ENCODE measurements at regions of chr17 and their contacts with region 1.

Region 1: DNA sequence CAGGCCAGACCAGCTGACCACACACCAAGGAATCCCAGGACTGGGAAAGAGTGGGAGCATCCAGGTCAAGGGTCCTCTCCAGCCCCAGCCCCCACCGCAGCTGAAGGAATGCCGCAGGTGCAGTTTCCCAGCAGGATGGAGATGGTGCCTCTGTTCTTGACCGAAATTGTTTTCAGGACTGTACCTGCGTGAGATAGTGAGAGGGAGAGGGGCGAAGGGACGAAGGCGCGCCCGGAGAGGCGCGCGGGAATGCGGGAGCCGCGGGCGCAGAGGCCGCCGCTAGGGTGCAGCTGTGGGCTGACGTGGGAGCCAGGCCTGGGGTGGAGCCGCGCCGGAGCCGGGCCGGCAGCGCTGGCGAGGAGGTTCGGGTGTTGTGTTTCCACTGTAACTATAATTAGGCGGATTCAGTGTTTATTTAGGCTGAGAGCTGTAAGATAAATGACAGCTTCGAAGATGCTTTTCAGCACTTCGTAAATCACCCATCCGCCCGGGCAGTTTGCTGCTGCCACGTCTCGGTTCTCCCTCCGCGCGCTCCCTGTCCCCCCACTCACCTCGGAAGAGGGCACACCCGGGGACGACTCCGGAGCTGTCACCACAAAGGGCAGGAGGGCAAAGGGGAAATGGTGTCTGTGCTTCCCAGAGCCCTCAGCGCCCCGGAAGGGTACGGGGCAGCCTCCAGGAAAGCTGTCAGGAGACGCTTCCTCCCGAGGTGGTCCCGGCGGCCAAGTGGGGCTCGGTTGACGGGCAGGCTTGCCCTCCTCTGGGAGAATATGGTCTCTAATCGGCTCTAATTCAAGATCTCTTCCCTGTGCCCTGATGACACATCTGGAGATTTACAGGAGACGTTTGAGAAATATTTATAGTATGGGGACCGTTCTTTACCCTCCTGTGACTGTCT is 38.2 kb downstream of the HOXB1 start:
- DNase-seq: peak; percentile 76
- H3K4me3 Mint-ChIP-seq: peak overlapping the region; percentile 39
- H3K27ac Mint-ChIP-seq: no peak overlapping the region
- H3K4me1 Mint-ChIP-seq: peaks cover 17% of the 10 kb centered on the region
- H3K27me3 Mint-ChIP-seq: peaks cover 11% of the 10 kb centered on the region

Region 2: GRCh38 chr17:48351831-48352332 is 140.8 kb before region 1 on chr17:
- CTCF ChIA-PET with region 1: interaction called, 23 read pairs
- POLR2A ChIA-PET with region 1: no interaction called
- intact Hi-C with region 1: no loop called
- DNase-seq: no peak
- H3K4me3 Mint-ChIP-seq: no peak overlapping the region
- H3K27ac Mint-ChIP-seq: no peak overlapping the region
- H3K4me1 Mint-ChIP-seq: peaks cover 6% of the 10 kb centered on the region
- H3K27me3 Mint-ChIP-seq: no peaks in the 10 kb centered on the region

Region 3: DNA sequence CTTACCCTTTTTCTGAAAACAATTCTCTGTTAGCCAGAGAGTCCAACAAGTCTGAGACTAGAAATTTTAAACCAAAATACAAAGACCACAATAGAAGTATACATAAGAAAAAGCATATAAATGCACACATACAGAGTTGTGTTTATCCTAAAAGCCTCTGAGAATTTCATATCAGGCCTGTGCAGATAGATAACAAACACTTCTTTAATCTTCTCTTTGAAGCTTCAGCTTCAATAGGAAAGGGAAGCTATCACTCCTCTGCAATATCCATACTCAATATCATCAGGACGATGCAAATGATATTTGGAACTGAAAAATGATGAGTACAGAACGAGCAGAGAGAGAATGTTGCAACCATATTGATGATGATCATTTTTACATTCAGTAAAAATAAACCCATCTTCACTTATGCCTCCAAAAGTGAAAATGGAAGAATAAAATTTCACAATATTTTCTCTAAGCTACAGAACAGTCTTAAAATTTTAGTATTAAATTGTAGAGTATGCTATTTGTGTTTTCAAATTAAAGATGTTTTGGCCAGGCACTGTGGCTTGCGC is 124.2 kb before region 1 on chr17:
- CTCF ChIA-PET with region 1: no interaction called
- POLR2A ChIA-PET with region 1: no interaction called
- intact Hi-C with region 1: no loop called
- DNase-seq: no peak
- H3K4me3 Mint-ChIP-seq: no peak overlapping the region
- H3K27ac Mint-ChIP-seq: no peak overlapping the region
- H3K4me1 Mint-ChIP-seq: peaks cover 16% of the 10 kb centered on the region
- H3K27me3 Mint-ChIP-seq: no peaks in the 10 kb centered on the region

Region 4: GRCh38 chr17:48460052-48460451 is 32.6 kb before region 1 on chr17:
- CTCF ChIA-PET with region 1: no interaction called
- POLR2A ChIA-PET with region 1: no interaction called
- intact Hi-C with region 1: no loop called
- DNase-seq: no peak
- H3K4me3 Mint-ChIP-seq: no peak overlapping the region
- H3K27ac Mint-ChIP-seq: no peak overlapping the region
- H3K4me1 Mint-ChIP-seq: peaks cover 37% of the 10 kb centered on the region
- H3K27me3 Mint-ChIP-seq: no peaks in the 10 kb centered on the region

Region 5: DNA sequence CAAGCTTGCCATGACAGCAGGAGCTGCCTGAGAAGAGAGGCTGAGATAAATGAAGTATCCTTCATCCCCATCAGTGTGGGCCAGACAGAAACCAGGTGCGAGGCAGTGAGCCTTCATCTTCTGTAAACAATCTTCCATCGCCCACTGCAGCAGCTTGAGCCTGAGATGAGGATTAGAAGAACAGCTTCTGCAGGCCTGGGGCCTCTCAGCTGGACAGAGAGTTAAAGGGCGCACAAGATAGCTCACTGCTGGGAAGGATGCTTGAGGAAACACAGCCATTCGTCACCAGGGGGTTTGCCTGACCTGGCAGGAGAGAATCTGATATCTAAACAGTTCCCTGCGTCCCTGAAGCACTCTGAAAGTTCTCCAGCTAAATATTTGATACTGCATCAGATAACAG is 11.1 kb after region 1 on chr17:
- CTCF ChIA-PET with region 1: interaction called, 10 read pairs
- POLR2A ChIA-PET with region 1: no interaction called
- intact Hi-C with region 1: no loop called
- DNase-seq: no peak
- H3K4me3 Mint-ChIP-seq: no peak overlapping the region
- H3K27ac Mint-ChIP-seq: no peak overlapping the region
- H3K4me1 Mint-ChIP-seq: peaks cover 16% of the 10 kb centered on the region
- H3K27me3 Mint-ChIP-seq: no peaks in the 10 kb centered on the region

Region 6: DNA sequence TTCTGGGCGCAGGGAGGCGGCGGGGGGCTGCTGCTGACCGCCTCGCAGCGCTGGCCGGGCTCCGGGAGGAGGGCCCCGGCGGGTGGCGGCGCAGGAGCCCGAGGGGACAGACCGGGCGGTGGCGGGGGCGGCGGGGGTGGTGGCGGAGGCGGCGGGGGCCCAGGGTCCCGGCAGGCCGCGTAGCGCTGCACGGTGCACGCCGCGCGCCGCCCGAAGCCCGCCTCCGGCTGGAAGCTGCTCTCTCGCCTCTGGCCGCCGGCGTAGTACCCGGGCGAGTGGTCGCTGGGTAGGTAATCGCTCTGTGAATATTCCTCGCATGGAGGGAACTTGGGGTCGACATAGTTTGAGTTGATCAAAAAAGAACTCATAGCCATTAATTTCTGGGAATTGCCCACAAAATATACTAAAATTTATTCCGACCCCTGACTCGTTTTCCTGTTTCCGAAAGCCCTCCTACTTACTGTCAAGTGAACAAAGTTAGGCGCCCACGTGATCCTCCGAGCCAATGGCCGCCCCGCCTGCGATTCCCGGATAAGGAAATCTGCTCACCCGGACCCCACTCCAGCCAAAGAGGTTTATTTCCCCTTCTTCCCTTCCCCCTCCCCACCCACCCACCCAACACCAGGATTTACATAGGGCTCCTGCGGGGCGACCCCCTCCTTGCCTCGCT is 85.4 kb after region 1 on chr17 and contains the start of gene HOXB4:
- CTCF ChIA-PET with region 1: interaction called, 5 read pairs
- POLR2A ChIA-PET with region 1: no interaction called
- intact Hi-C with region 1: loop called (anchors 2 kb)
- DNase-seq: peak; percentile 82
- H3K4me3 Mint-ChIP-seq: peak within 1 kb of the TSS; percentile 80
- H3K27ac Mint-ChIP-seq: peak within 1 kb of the TSS; percentile 59
- H3K4me1 Mint-ChIP-seq: peaks cover 35% of the 10 kb centered on the region
- H3K27me3 Mint-ChIP-seq: peaks cover 42% of the 10 kb centered on the region
- total RNA-seq, gene HOXB4: 2.3 TPM

Region 7: GRCh38 chr17:48718761-48719641 is 226.4 kb after region 1 on chr17:
- CTCF ChIA-PET with region 1: no interaction called
- POLR2A ChIA-PET with region 1: no interaction called
- intact Hi-C with region 1: no loop called
- DNase-seq: no peak
- H3K4me3 Mint-ChIP-seq: peak overlapping the region; percentile 33
- H3K27ac Mint-ChIP-seq: peak overlapping the region; percentile 5
- H3K4me1 Mint-ChIP-seq: peaks cover 21% of the 10 kb centered on the region
- H3K27me3 Mint-ChIP-seq: peaks cover 78% of the 10 kb centered on the region

Measured in activated CD4-positive, alpha-beta memory T cell treated with anti-CD3 and anti-CD28 coated beads for 36 hours (primary cell).